Activated B cell treated with CpG ODN at 0.5 μM for 24 hours (primary cell): ENCODE measurements at regions of chr3 and their contacts with region 1.

Region 1: DNA sequence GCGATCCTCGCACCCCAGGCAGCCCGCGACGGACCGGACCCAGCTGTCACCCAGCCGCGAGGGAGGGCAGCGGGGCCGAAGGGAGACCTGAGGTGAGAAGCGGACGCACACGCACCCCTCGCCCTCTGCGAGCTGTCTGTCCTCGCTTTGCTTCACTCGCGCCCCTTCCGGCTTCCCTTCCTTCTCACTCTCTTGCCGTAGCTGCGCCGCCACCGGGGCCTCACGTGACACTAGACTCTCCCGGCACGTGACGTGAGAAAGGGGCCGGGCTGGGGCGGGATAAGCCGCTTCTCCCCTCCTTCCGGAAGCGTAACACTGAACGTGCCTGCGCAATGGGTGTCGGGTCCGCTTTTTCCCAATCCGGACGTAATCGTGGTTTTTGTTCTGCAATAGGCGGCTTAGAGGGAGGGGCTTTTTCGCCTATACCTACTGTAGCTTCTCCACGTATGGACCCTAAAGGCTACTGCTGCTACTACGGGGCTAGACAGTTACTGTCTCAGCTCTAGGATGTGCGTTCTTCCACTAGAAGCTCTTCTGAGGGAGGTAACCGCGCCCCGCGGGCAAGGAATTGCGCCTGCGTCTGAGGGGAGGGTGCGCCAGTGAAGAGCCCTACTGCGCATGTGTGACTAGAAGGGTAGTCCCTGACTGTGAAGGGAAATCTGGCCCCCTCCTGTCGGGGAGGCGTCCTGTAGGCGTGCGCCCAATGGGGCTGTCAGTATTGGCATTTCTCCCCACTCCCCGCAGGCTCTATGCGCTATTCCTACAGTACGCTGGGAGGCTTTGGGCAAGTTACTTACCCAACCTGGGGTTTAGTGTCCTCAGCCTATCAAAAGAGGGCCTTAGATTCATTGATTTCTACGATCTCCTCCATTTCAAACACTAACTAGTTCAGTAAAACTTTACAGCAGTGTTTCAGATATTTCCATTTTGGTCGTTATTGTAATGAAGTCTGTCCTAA is at the starts of genes ATG3 and SLC35A5:
- DNase-seq: peak; percentile 99
- ATAC-seq: peak; percentile 80
- H3K4me3 Mint-ChIP-seq: peak within 1 kb of the TSS; percentile 99
- H3K27ac Mint-ChIP-seq: peak within 1 kb of the TSS; percentile 99
- H3K4me1 Mint-ChIP-seq: peaks cover 50% of the 10 kb centered on the region
- H3K27me3 Mint-ChIP-seq: no peaks in the 10 kb centered on the region
- CTCF ChIP-seq: no peak
- total RNA-seq, gene ATG3: 48.3 and 54.9 TPM in 2 replicates
- total RNA-seq, gene SLC35A5: 25.1 and 26.6 TPM in 2 replicates

Region 2: DNA sequence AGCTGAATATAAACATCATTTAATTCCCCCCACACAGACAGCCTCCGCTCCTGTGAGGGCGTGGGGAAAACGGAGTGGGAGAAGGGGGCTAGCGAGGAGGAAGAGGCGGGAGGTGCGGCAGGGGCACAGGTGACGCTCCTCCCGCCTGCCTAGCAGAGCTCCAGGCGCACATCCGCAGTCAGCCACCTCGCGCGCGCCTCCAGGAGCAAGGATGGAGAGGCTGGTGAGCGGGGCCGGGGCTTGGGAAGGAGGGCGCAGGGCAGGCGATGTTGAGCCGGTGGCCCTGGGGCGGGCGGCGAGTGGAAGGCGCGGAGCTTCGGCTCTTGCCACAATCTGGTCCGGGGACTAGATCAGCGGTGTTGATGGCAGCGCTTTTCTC is 229.0 kb before region 1 on chr3 and contains the start of gene CD200:
- CTCF ChIA-PET with region 1: no interaction called
- POLR2A ChIA-PET with region 1: interaction called, 13 read pairs
- intact Hi-C with region 1: no loop called
- DNase-seq: peak; percentile 45
- ATAC-seq: peak; percentile 77
- H3K4me3 Mint-ChIP-seq: peak within 1 kb of the TSS; percentile 94
- H3K27ac Mint-ChIP-seq: peak within 1 kb of the TSS; percentile 94
- H3K4me1 Mint-ChIP-seq: peaks cover 59% of the 10 kb centered on the region
- H3K27me3 Mint-ChIP-seq: no peaks in the 10 kb centered on the region
- CTCF ChIP-seq: no peak
- total RNA-seq, gene CD200: 19.0 and 19.4 TPM in 2 replicates

Region 3: DNA sequence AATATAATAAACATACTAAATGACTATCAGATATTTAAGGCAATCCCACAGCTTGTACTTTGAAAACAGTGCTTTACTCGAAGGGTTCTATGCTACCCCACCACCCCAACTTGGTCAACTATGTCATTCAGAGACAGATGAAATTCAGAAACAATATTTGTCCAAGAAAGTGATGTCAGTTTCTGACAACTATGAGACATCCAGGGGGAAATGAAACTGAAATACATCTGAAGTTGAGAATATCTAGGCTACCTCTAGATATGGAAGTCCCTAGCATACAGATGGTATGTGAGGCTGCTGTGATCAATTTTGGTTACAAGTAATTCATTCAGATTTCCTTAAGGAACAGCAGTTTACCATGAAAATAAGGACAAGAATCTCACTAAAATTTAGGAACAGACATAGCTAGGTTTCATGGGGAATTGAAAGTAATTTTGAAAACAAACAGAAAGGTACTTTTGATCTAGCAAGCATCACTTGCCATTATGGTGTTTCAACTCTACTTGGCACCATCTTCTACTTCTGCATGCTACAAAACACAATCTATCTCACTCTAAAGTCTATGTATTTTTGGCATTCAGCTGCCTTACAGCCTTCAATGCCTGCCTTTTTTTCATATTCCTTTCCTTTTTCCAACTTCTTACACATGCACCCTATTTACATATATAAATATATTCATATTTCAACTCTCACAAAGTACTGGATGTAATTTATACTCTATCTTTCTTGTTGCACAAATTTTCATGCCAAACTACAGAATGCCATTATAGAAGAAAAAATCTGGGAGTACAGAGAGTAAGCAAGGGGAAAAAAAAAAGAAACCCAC is 22.0 kb before region 1 on chr3:
- CTCF ChIA-PET with region 1: no interaction called
- POLR2A ChIA-PET with region 1: interaction called, 11 read pairs
- intact Hi-C with region 1: loop called (anchors 1 kb)
- DNase-seq: no peak
- ATAC-seq: peak; percentile 91
- H3K4me3 Mint-ChIP-seq: peak overlapping the region; percentile 32
- H3K27ac Mint-ChIP-seq: peak overlapping the region; percentile 68
- H3K4me1 Mint-ChIP-seq: peaks cover 26% of the 10 kb centered on the region
- H3K27me3 Mint-ChIP-seq: no peaks in the 10 kb centered on the region
- CTCF ChIP-seq: no peak

Region 4: GRCh38 chr3:112685420-112685819 is 123.4 kb after region 1 on chr3:
- CTCF ChIA-PET with region 1: no interaction called
- POLR2A ChIA-PET with region 1: no interaction called
- intact Hi-C with region 1: no loop called
- DNase-seq: no peak
- ATAC-seq: no peak
- H3K4me3 Mint-ChIP-seq: no peak overlapping the region
- H3K27ac Mint-ChIP-seq: no peak overlapping the region
- H3K4me1 Mint-ChIP-seq: peaks cover 13% of the 10 kb centered on the region
- H3K27me3 Mint-ChIP-seq: no peaks in the 10 kb centered on the region
- CTCF ChIP-seq: no peak

Region 5: GRCh38 chr3:112858410-112859069 is 296.5 kb after region 1 on chr3:
- CTCF ChIA-PET with region 1: no interaction called
- POLR2A ChIA-PET with region 1: no interaction called
- intact Hi-C with region 1: loop called (anchors 10 kb)
- DNase-seq: peak; percentile 32
- ATAC-seq: peak; percentile 76
- H3K4me3 Mint-ChIP-seq: peak overlapping the region; percentile 69
- H3K27ac Mint-ChIP-seq: peak overlapping the region; percentile 89
- H3K4me1 Mint-ChIP-seq: peaks cover 45% of the 10 kb centered on the region
- H3K27me3 Mint-ChIP-seq: no peaks in the 10 kb centered on the region
- CTCF ChIP-seq: no peak

Region 6: DNA sequence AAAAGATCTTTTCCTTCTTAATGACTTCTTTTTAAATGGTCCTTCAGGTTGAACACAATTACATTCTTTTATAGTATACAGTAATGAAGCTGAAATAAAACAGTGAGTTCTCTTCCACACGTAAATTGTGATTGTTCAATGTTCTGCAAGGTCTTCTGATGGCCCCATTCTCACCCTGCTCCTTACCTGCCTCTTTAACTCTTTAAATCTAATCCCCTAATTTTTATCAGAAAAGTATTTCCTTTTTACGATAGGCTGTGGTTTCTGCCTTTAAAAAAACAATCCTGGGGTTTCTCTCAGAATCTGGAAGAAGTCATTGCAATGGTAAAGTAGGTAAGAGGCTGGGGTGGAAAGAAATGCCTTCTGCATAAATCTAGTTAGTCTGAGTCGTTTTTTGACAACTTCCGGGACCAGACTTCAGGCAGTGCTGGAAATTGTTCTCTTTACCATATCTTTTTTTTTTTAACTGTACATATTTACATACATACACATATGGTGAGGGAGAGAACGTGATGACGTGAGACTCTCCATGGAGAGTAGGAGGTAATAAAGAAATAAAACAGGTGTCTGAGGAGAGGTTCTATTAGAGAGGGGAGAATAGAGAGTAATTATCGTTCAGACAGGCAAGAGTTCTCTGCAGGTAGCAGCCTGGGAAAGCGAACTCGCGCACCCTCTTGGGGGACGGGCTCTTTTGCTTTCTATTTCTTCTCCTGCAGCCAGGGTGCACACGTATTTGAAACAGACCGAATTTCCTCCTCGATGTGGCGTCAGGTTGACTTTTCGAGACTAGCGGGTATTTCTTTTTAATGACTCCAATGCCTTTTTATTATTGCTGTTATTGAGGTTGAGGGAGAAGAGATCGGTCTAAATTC is 970.1 kb after region 1 on chr3 and contains the start of gene SIDT1:
- CTCF ChIA-PET with region 1: no interaction called
- POLR2A ChIA-PET with region 1: no interaction called
- intact Hi-C with region 1: loop called (anchors 5 kb)
- DNase-seq: peak; percentile 49
- ATAC-seq: peak; percentile 80
- H3K4me3 Mint-ChIP-seq: peak within 1 kb of the TSS; percentile 98
- H3K27ac Mint-ChIP-seq: peak within 1 kb of the TSS; percentile 100
- H3K4me1 Mint-ChIP-seq: peaks cover 47% of the 10 kb centered on the region
- H3K27me3 Mint-ChIP-seq: peaks cover 2% of the 10 kb centered on the region
- CTCF ChIP-seq: no peak
- total RNA-seq, gene SIDT1: 35.7 and 44.9 TPM in 2 replicates